GM10248 (cell line): ENCODE measurements at regions of chr19 and their contacts with region 1.

Region 1: DNA sequence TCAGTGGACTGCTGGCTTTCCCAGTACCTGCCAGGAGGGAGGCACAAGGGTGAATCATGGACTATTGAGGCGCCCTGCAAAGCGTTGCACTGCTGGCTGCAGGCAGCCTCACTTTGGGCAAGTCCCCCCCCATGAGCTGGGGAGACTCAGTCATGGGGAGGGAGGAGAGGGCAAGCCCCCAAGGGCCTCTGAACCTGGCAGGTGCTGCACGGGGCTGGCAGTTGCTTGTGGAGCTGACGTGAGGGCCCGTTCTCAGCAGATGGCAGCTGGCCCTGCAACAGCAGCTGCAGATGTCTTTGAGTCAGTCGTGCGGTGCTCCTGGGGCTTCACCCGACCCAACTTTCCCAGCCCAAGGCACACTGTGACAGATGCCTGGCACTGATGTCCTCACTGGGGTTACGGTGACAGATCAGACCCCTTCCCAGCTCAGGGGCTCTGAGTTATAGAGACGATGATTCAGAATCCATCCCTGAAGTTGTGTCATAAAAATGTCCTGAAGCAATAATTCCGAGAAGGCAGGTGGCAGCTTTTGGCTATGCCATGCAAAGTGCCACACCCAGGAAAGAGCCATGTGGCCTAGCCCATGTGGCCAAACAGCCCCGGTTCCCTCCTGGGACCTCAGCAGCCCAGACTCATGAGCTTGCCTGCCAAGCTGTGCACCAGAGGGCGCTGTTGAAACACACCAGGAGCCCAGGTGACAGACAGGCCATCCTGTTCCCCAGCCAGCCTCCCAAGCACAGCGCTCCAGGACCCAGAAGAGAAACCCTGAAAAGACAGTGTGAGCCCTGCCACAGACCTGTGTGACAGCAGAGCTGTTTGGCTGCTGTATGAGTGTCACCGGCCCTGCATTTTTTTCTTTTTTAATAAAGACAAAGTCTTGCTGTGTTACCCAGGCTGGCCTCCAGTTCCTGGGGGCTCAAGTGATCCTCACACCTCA is 53.6 kb upstream of the LDLR start:
- DNase-seq: peak; percentile 92
- CTCF ChIP-seq: peak; percentile 95

Region 2: DNA sequence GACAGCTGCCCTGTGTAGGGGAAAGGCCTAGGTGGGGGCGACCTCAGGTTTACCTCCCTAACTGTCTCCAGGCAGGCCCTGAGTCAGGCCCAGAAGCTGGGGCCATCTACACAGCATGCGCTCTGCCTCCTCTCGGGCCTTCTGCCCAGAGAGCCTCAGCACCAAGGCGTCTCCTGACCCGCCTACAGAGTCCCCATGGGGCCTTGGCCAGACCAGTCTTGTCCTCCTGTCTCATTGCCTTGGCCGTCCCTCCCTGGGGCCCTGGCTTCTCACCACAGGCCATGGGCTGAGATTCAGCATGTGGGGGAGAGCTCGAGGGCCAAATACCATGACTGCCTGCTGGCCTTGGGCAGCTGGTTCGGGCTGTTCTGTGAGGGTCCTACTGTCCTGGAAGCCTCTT is 15.9 kb before region 1 on chr19:
- CTCF ChIA-PET with region 1: interaction called, 16 read pairs
- POLR2A ChIA-PET with region 1: interaction called, 3 read pairs
- DNase-seq: no peak
- CTCF ChIP-seq: no peak

Region 3: DNA sequence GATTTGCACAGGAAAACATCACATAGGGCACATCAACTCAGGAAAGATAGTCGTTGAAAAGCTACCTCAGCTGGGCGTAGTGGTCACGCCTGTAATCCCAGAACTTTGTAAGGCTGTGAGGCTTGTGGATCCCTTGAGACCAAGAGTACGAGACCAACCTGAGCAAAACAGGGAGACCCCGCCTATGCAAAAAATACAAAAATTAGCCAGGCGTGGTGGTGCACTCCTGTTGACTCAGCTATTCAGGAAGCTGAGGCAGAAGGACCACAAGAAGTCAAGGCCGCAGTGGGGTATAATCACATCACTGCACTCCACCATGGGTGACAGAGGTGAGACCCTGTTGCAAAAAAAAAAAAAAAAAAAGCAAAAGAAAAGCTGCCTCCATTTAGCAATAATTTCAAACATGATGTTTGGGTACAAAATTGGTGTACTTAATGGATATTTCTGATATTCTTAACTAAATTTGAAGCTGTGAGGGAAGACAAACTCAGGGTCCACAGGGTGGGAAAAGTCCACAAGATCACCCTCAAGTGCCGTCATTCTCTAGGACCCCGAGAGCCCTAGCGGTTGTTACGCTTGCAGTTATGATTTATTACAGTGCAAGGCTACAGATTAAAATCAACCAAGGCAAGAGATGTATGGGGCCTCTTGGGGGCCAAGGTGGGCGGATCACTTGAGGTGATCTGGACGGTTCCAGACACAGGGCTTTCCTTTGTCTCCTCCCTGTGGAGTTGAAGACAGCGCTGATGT is 11.1 kb after region 1 on chr19:
- CTCF ChIA-PET with region 1: interaction called, 37 read pairs
- POLR2A ChIA-PET with region 1: no interaction called
- DNase-seq: no peak
- CTCF ChIP-seq: no peak

Region 4: DNA sequence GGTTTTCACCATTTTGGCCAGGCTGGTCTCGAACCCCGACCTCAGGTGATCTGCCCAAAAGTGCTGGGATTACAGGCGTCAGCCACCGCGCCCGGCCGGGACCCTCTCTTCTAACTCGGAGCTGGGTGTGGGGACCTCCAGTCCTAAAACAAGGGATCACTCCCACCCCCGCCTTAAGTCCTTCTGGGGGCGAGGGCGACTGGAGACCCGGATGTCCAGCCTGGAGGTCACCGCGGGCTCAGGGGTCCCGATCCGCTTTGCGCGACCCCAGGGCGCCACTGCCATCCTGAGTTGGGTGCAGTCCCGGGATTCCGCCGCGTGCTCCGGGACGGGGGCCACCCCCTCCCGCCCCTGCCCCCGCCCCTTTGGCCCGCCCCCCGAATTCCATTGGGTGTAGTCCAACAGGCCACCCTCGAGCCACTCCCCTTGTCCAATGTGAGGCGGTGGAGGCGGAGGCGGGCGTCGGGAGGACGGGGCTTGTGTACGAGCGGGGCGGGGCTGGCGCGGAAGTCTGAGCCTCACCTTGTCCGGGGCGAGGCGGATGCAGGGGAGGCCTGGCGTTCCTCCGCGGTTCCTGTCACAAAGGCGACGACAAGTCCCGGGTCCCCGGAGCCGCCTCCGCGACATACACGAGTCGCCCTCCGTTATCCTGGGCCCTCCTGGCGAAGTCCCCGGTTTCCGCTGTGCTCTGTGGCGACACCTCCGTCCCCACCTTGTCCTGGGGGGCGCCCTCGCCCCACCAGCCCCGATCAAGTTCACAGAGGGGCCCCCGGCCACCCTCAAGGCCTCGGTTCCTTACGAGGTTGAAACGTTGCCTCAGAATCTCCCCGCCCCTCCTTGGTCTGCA is 54.6 kb after region 1 on chr19:
- CTCF ChIA-PET with region 1: interaction called, 31 read pairs
- POLR2A ChIA-PET with region 1: no interaction called
- DNase-seq: peak; percentile 94
- CTCF ChIP-seq: peak; percentile 22

Region 5: DNA sequence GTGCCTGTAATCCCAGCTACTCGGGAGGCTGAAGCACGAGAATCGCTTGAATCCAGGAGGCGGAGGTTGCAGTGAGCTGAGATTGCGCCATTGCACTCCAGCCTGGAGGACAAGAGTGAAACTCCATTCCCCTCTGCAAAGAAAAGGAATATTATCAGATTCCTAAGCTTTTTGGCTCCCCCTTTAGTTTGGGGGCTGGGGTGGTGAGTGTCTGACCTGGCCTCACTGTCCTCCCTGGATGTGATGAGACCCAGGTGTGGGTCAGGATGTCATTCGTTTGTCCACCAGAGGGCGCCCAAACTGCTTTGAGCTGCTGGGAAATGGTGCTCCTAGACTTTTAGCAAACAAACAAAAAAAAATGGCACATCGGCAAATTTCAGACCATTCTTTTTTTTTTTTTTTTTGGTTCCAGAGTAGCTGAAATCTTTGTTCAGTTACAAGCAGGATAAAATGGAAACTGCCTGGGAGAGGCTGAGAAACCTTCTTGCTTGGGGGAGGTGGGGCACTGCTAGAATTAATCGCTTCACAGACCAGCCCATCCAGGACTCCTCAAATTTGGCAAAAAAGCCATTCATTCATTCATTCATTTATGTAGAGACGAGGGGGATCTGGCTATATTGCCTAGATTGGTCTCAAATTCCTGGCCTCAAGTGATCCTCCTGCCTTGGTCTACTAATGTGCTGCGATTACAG is 90.4 kb after region 1 on chr19:
- CTCF ChIA-PET with region 1: interaction called, 20 read pairs
- POLR2A ChIA-PET with region 1: no interaction called
- DNase-seq: peak; percentile 77
- CTCF ChIP-seq: peak; percentile 82

Region 6: DNA sequence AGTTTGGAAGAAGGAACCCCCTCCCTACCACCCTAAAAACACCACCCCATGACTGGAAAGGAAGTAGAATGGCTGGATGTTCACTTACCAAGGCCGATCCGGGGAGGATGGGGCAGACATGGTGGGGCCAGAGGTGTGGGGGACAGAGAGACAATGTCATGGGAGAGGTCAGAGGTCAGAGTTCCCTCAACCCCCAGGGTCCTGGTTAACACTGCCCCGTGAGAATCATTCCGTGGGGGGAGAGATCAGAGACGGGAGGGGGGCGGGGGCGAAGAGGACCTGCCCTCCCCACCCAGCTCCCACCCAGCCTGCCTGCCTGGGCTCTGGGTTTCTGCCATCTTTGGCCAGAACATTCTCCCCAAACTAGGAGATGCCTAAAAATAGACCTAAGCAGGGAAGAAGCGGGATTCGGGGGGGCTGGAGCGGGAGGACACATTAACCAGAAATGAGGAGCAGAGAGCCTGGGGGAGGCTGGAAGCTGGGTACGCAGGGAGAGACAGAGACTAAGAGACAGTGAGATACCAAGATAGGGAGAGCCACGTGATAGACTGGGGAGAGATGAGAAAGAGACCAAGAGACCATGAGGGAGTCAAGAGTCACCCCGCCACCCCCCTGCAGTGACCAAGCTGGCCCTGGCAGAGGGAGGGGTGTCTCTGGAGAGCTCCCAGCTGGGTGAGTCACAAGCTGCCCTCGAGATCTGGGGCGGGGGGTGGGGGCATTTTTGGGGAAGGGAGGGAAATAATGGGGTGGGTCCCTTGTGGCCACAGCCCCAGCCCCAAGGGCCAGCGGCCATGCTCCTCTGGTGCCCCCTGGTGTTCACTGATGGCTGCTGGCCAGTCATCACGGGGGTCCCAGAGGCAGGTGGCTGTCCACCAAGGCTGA is 167.7 kb after region 1 on chr19:
- CTCF ChIA-PET with region 1: interaction called, 14 read pairs
- POLR2A ChIA-PET with region 1: no interaction called
- DNase-seq: peak; percentile 71
- CTCF ChIP-seq: peak; percentile 79

Region 7: DNA sequence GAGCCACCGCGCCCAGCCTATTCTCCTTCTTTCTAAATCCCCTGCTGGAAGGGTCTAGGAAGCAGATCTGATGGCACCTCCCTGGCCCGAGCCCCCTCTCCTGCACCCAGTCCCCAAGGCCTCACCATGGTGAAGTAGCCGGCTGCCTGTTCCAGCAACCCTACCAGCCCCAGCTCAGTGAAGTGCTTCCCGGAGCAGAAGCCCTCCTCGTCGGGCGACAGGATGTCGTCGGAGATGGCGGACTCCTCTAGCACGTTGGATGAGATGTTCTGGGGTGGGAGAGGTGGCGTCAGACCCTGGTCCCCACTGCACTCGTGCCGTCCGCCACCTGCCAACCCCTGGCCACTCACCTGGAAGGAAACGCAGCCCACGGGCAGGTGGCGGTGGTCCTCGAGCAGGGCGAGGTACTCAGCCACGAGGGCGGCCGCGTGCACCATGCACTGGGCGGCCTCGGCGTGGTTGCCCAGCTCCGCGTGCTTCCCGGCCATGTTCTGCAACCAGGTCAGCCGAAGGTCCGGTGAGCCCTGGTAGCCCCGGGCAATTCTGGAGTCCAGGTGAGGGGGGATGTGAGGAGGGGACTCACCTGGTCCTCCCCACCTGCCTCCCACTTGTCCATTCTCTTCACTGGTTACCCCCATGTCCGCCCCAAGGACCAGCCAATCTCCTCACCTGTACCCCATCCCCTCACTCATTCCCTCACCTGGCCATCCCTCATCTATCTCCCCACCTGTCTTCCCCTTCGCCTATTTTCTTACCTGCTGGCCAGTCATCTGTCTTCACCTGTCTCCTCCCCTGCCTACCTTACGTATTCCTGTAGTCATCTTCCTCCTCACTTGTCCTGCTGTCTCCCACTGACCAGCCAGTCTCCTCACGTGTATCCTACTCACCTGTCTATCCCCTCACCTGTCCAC is 173.1 kb after region 1 on chr19:
- CTCF ChIA-PET with region 1: interaction called, 14 read pairs
- POLR2A ChIA-PET with region 1: no interaction called
- DNase-seq: no peak
- CTCF ChIP-seq: no peak